Caco-2 (cell line): ENCODE measurements at regions of chr7 and their contacts with region 1.

Region 1: DNA sequence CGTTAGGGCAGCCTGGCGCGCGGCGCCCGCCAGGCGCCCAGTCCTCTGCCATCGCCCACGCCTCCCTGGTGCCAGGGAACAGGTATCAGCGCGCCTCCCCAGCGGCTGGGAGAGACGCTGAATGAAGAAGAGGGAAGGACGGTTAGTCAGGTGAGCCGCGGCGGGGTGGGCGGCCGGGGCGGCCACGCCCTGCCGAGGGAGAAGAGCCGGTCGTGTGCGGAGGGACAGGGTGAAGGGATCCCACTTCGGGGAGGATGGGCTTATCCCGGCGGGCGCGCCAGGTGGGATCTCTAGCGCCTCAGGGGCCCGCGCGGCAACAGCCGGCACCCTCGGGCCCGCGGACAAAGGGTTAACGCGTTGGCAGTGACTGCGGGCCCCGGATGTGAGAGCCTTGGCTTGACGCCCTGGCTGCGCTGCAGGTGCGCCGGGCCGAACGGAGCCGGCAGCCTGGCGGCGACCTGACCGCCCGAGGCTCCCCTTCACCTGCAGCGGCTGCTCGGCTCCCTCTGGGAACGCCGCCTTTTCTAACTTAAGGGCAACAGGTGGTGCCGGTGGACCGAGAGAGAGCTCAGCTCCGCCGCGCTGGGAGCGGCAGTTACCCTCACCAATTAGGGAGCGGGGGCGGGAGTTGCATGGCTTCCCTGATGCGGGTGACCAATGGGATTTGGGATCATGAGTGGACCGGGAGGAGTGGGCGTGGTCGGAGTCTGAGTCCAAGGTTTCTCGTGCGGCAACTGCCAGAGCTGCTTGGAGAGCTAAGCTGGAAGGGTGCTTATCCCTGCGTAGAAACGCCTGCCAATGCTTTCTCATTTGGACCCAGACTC is at the start of gene ARL4A:
- DNase-seq: peak; percentile 99
- H3K4me3 ChIP-seq: peak within 1 kb of the TSS; percentile 83
- H3K4me3 Mint-ChIP-seq: peak within 1 kb of the TSS; percentile 93
- H3K27ac Mint-ChIP-seq: peak within 1 kb of the TSS; percentile 89
- H3K4me1 ChIP-seq: peaks cover 7% of the 10 kb centered on the region
- H3K4me1 Mint-ChIP-seq: peaks cover 19% of the 10 kb centered on the region
- H3K27me3 ChIP-seq: no peaks in the 10 kb centered on the region
- H3K27me3 Mint-ChIP-seq: no peaks in the 10 kb centered on the region
- CTCF ChIP-seq: peak in 1 of 2 experiments; percentile 61
- total RNA-seq, gene ARL4A: 40.6 and 42.5 TPM in 2 replicates

Region 2: GRCh38 chr7:12715372-12716133 is 28.4 kb after region 1 on chr7:
- CTCF ChIA-PET with region 1: interaction called, 15 read pairs
- POLR2A ChIA-PET with region 1: interaction called, 9 read pairs
- intact Hi-C with region 1: no loop called
- DNase-seq: peak; percentile 49 to 56
- H3K4me3 ChIP-seq: no peak overlapping the region
- H3K4me3 Mint-ChIP-seq: peak overlapping the region; percentile 51
- H3K27ac Mint-ChIP-seq: peak overlapping the region; percentile 81
- H3K4me1 ChIP-seq: peaks cover 12% of the 10 kb centered on the region
- H3K4me1 Mint-ChIP-seq: peaks cover 20% of the 10 kb centered on the region
- H3K27me3 ChIP-seq: no peaks in the 10 kb centered on the region
- H3K27me3 Mint-ChIP-seq: no peaks in the 10 kb centered on the region
- CTCF ChIP-seq: no peak

Region 3: GRCh38 chr7:12821746-12822145 is 134.6 kb after region 1 on chr7:
- CTCF ChIA-PET with region 1: interaction called, 3 read pairs
- POLR2A ChIA-PET with region 1: no interaction called
- intact Hi-C with region 1: loop called (anchors 5 kb)
- DNase-seq: no peak
- H3K4me3 ChIP-seq: no peak overlapping the region
- H3K4me3 Mint-ChIP-seq: no peak overlapping the region
- H3K27ac Mint-ChIP-seq: no peak overlapping the region
- H3K4me1 ChIP-seq: no peaks in the 10 kb centered on the region; the same call in 1 of the 2 replicates
- H3K4me1 Mint-ChIP-seq: peaks cover 16% of the 10 kb centered on the region
- H3K27me3 ChIP-seq: no peaks in the 10 kb centered on the region
- H3K27me3 Mint-ChIP-seq: no peaks in the 10 kb centered on the region
- CTCF ChIP-seq: no peak

Region 4: GRCh38 chr7:13017333-13017853 is 330.3 kb after region 1 on chr7:
- CTCF ChIA-PET with region 1: interaction called, 19 read pairs
- POLR2A ChIA-PET with region 1: interaction called, 13 read pairs
- intact Hi-C with region 1: loop called (anchors 1 kb)
- DNase-seq: peak; percentile 87 to 91
- H3K4me3 ChIP-seq: peak overlapping the region; percentile 37
- H3K4me3 Mint-ChIP-seq: peak overlapping the region; percentile 78
- H3K27ac Mint-ChIP-seq: peak overlapping the region; percentile 69
- H3K4me1 ChIP-seq: peaks cover 76% of the 10 kb centered on the region
- H3K4me1 Mint-ChIP-seq: peaks cover 36% of the 10 kb centered on the region
- H3K27me3 ChIP-seq: no peaks in the 10 kb centered on the region
- H3K27me3 Mint-ChIP-seq: no peaks in the 10 kb centered on the region
- CTCF ChIP-seq: no peak

Region 5: GRCh38 chr7:13179102-13179501 is 492.0 kb after region 1 on chr7:
- CTCF ChIA-PET with region 1: interaction called, 5 read pairs
- POLR2A ChIA-PET with region 1: interaction called, 5 read pairs
- intact Hi-C with region 1: loop called (anchors 1 kb)
- DNase-seq: peak in 1 of 2 experiments; percentile 18
- H3K4me3 ChIP-seq: no peak overlapping the region
- H3K4me3 Mint-ChIP-seq: no peak overlapping the region
- H3K27ac Mint-ChIP-seq: no peak overlapping the region
- H3K4me1 ChIP-seq: peaks cover 19% of the 10 kb centered on the region
- H3K4me1 Mint-ChIP-seq: peaks cover 14% of the 10 kb centered on the region
- H3K27me3 ChIP-seq: no peaks in the 10 kb centered on the region
- H3K27me3 Mint-ChIP-seq: no peaks in the 10 kb centered on the region
- CTCF ChIP-seq: no peak